GM23248 (cell line): ENCODE measurements at regions of chr6 and their contacts with region 1.

Region 1: DNA sequence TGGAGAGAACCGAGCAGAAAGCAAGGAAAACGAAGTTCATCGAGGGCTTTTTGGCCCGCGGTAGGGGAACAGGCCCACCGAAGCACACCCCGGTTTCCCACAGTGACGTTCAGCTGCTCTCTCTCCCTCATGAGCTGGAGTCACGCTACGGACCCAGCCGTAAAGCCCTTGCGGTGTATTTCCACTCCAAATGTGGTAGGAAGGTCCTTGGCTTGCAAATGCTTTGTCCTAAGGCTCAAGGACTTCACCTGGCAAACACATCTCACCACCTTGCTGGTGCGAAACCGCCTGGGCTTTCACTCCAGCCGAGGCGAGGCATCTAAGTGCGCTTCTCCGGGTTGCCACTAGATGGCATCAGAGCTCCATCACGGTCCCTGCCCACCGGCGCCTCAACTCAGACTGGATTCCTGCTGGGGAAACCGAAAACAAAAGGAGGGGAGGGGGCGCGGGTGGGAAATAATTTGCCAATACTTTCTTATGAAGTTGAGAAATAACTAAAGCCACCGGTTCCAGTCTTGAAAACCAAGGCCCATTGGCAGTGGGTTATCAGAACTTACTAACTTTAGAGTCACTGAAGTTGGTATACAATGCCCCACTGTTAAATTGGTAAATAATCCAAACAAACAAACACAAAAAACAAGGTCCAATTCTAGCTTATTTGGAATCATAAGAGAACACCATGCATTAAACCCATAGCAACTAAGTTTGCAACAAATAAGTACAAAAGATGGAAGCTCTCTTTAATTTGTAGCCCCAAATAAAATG is 13.4 kb upstream of the FOXC1 start:
- DNase-seq: peak; percentile 62
- H3K4me3 ChIP-seq: peak overlapping the region; percentile 75
- H3K27ac ChIP-seq: no peak overlapping the region
- H3K4me1 ChIP-seq: peaks cover 3% of the 10 kb centered on the region; the same call in 1 of the 2 replicates
- H3K27me3 ChIP-seq: peaks cover 17% of the 10 kb centered on the region

Region 2: DNA sequence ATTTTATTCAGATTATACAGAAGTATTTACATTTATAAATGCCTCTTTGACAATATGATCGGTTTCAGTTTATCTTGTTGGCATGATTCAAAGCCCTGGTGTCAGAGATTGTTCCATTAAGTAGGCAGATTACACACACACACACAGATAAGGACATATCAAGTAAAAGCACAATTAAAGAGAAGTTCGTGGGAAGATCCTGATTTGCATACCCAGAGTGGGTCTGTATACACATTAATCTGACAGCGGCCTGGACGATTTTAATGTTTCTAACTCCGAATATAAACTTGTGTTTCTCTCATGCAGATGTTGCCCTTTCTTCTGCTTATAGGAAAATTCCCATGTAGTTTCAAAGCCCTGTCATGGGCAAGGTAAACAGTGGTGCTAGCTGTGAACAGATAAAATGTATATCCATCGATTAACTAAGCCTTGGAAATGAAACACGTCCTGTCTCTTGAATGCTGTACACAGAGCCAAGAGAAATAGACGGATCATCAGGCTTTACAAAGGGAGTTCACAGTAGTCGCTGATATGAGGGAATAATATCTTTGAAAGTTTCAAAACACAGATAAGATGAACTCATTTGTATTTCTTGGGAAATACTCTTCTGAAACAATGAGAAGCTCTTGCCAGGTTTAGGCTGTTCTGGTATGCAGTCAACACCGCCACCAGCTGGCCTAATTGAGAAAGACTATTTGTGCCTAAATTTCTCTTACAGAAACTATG is 757.3 kb after region 1 on chr6:
- in situ Hi-C with region 1: loop called (anchors 10 kb)
- DNase-seq: peak; percentile 89
- H3K4me3 ChIP-seq: no peak overlapping the region
- H3K27ac ChIP-seq: no peak overlapping the region
- H3K4me1 ChIP-seq: peaks cover 25% of the 10 kb centered on the region
- H3K27me3 ChIP-seq: no peaks in the 10 kb centered on the region

Region 3: DNA sequence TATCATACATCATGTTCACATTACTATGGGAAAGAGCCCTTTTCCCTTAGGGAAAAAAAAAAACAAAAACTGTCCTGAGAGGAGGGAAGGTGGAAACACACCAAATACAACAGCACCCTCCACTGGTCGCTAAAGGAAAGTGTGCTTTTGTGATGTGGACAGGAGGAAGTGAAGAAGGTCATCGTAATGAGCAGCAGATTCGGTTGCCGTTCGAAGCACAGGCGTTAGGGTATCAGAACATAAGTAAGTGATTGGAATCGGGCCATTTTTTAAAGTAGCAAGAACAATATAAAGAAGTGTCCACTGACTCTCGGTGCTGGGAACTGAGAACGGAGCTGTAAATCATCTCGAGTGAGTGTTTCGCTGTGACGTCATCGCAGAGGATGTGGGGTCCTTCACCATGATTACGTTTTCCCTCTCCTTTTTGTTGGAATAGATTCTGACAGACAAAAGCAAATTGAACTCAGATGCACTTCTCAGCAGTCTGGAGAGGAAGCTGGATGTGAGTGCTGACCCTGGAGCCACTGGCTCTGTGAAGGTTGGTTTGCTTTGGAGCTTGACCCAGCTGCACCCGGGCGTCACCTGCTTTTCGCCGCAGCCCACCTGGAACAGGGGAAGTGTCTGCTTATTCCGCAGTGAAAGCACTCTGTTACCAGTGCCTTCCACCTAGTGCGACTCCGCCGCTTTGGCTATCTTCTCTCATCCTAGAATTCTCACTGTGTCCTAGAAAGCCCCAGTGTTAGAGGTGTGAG is 852.7 kb after region 1 on chr6:
- in situ Hi-C with region 1: loop called (anchors 10 kb)
- DNase-seq: peak; percentile 84
- H3K4me3 ChIP-seq: peak overlapping the region; percentile 76
- H3K27ac ChIP-seq: no peak overlapping the region
- H3K4me1 ChIP-seq: 0 out of 2 replicates have a peak, but pooled peaks cover 13% of the 10 kb centered on the region
- H3K27me3 ChIP-seq: no peaks in the 10 kb centered on the region

Region 4: DNA sequence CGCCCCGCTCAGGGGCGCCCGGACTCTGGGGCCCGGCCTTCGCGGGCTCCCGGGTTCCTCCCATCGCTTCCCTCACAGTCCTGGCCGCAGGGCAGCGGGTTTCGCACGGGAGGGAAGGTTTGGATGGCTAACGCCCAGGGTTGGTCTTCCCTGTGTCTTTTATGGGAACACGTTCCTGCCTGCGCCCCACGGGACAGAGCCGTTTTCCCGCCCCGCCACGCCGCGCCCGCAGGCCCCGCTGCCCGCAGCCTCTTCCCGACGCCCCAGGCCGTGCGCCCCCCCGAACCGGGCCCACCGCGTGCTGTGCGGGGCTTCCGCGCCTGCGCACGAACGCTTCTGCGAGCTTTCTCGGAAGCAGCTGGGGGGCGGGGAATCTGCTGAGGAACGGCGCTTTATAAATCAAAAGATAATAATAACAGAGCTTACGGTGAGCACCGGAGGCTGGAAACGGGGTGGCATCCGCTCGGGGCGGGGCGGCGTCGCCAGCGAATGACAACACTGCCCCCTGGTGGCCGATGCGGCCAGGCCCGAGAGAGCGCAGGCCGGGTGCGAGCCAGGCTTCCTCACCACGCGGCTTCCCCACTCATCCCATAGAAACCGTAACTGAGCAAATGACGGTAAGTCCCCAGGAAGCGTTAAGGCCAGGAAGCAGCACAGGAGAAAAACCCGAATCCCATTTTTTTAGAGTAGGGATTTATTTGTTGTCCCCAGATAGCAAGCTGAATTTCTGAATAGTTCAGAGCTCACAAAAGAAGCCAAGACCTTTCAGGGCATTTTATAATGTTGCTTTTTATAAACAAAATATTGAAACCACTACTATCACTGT is 1038.1 kb after region 1 on chr6:
- in situ Hi-C with region 1: loop called (anchors 25 kb)
- DNase-seq: peak; percentile 85
- H3K4me3 ChIP-seq: peak overlapping the region; percentile 70
- H3K27ac ChIP-seq: peak overlapping the region; percentile 17
- H3K4me1 ChIP-seq: peaks cover 18% of the 10 kb centered on the region
- H3K27me3 ChIP-seq: no peaks in the 10 kb centered on the region